Caco-2 (cell line): ENCODE measurements at regions of chr7 and their contacts with region 1.

Region 1: GRCh38 chr7:76047811-76048667 is at the starts of genes MDH2 and STYXL1:
- DNase-seq: peak; percentile 96 to 97
- H3K4me3 ChIP-seq: peak within 1 kb of the TSS; percentile 77
- H3K4me3 Mint-ChIP-seq: peak within 1 kb of the TSS; percentile 100
- H3K27ac Mint-ChIP-seq: peak within 1 kb of the TSS; percentile 99
- H3K4me1 ChIP-seq: peaks cover 13% of the 10 kb centered on the region
- H3K4me1 Mint-ChIP-seq: peaks cover 22% of the 10 kb centered on the region
- H3K27me3 ChIP-seq: no peaks in the 10 kb centered on the region
- H3K27me3 Mint-ChIP-seq: no peaks in the 10 kb centered on the region
- CTCF ChIP-seq: no peak
- total RNA-seq, gene MDH2: 302 and 313 TPM in 2 replicates
- total RNA-seq, gene STYXL1: 42.3 and 49.7 TPM in 2 replicates

Region 2: DNA sequence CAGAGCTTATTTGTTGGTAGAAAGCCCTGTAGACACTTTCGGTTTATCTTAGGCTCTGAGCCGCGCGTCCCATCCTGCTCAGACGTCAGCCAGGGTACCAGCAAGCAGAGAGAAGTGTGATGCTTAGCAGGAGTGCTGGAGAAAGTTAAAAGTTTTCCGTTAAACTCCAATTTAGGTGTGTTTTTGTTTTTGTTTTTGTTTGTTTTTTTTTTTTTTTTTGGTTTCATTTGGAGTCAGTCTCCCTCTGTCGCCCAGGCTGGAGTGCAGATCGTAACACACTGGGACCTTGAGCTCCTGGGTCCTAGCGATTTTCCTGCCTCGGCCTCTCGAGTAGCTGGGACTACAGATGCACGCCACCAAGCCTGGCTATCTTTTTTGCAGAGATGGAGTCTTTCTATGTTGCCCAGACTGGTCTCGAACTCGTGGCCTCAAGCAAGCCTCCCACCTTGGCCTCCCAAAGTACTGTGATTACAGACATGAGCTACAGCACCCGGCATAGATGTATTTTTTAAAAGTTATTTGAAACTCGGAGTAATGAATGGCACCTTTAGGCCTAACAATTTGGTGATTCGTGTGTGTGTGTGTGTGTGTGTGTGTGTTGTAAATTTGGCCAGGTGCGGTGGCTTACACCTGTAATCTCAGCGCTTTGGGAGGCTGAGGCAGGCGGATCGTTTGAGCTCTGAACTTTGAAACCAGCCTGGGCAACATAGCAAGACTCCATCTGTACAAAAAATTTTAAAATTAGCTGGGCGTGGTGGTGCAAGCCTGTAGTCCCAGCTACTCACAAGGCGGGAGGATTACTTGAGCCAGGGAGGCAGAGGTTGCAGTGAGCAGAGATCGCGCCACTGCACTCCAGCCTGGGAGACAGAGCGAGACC is 308.0 kb before region 1 on chr7:
- CTCF ChIA-PET with region 1: no interaction called
- POLR2A ChIA-PET with region 1: interaction called, 13 read pairs
- intact Hi-C with region 1: no loop called
- DNase-seq: peak in 1 of 2 experiments; percentile 44
- H3K4me3 ChIP-seq: peak overlapping the region; percentile 98
- H3K4me3 Mint-ChIP-seq: peak overlapping the region; percentile 82
- H3K27ac Mint-ChIP-seq: peak overlapping the region; percentile 46
- H3K4me1 ChIP-seq: no peaks in the 10 kb centered on the region
- H3K4me1 Mint-ChIP-seq: peaks cover 14% of the 10 kb centered on the region
- H3K27me3 ChIP-seq: no peaks in the 10 kb centered on the region
- H3K27me3 Mint-ChIP-seq: peaks cover 11% of the 10 kb centered on the region
- CTCF ChIP-seq: no peak

Region 3: DNA sequence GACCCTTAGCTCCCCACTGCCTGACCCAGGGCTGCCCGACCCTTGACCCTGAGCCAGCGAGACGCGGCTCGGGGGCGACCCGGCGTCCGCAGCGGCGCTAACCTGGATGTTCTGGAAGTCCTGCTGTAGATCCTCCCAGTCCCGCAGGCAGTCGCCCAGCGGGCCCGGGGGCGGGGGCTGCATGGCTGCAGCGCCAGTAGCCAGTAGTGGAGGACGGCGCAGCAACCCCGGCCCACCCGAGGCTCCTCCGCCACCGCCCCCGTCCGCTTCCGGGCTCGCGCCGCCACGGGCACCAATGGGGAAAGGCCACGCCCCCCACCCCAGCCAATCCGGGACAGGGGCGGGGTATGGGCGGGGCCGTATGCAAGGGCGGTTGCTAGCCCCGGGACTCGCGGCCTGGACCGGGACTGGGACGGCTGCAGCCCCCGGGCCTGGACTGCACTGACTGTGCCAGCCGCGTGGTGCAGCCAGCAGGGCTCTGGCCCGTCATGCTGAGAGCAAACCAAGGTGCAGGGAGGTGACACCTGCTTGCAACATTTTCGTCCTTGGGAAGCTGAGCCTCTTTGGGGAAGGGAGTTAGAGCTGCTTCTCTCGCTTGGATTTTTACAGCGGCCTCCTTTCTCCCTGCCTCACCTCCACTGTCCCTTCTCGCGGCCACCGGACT is 53.5 kb before region 1 on chr7 and contains the start of gene TMEM120A:
- CTCF ChIA-PET with region 1: interaction called, 3 read pairs
- POLR2A ChIA-PET with region 1: interaction called, 5 read pairs
- intact Hi-C with region 1: loop called (anchors 5 kb)
- DNase-seq: peak; percentile 96 to 98
- H3K4me3 ChIP-seq: peak within 1 kb of the TSS; percentile 89
- H3K4me3 Mint-ChIP-seq: peak within 1 kb of the TSS; percentile 80
- H3K27ac Mint-ChIP-seq: peak within 1 kb of the TSS; percentile 87
- H3K4me1 ChIP-seq: peaks cover 40% of the 10 kb centered on the region
- H3K4me1 Mint-ChIP-seq: peaks cover 30% of the 10 kb centered on the region
- H3K27me3 ChIP-seq: no peaks in the 10 kb centered on the region
- H3K27me3 Mint-ChIP-seq: no peaks in the 10 kb centered on the region
- CTCF ChIP-seq: no peak
- total RNA-seq, gene TMEM120A: 65.4 and 71.1 TPM in 2 replicates

Region 4: GRCh38 chr7:76037310-76037709 is 10.7 kb before region 1 on chr7:
- CTCF ChIA-PET with region 1: no interaction called
- POLR2A ChIA-PET with region 1: interaction called, 12 read pairs
- intact Hi-C with region 1: no loop called
- DNase-seq: no peak
- H3K4me3 ChIP-seq: no peak overlapping the region
- H3K4me3 Mint-ChIP-seq: no peak overlapping the region
- H3K27ac Mint-ChIP-seq: no peak overlapping the region
- H3K4me1 ChIP-seq: no peaks in the 10 kb centered on the region
- H3K4me1 Mint-ChIP-seq: no peaks in the 10 kb centered on the region
- H3K27me3 ChIP-seq: no peaks in the 10 kb centered on the region
- H3K27me3 Mint-ChIP-seq: no peaks in the 10 kb centered on the region
- CTCF ChIP-seq: no peak

Region 5: GRCh38 chr7:76133164-76133775 is 85.2 kb after region 1 on chr7:
- CTCF ChIA-PET with region 1: no interaction called
- POLR2A ChIA-PET with region 1: interaction called, 3 read pairs
- intact Hi-C with region 1: loop called (anchors 5 kb)
- DNase-seq: no peak
- H3K4me3 ChIP-seq: no peak overlapping the region
- H3K4me3 Mint-ChIP-seq: no peak overlapping the region
- H3K27ac Mint-ChIP-seq: no peak overlapping the region
- H3K4me1 ChIP-seq: no peaks in the 10 kb centered on the region
- H3K4me1 Mint-ChIP-seq: no peaks in the 10 kb centered on the region
- H3K27me3 ChIP-seq: no peaks in the 10 kb centered on the region
- H3K27me3 Mint-ChIP-seq: peaks cover 21% of the 10 kb centered on the region
- CTCF ChIP-seq: no peak

Region 6: DNA sequence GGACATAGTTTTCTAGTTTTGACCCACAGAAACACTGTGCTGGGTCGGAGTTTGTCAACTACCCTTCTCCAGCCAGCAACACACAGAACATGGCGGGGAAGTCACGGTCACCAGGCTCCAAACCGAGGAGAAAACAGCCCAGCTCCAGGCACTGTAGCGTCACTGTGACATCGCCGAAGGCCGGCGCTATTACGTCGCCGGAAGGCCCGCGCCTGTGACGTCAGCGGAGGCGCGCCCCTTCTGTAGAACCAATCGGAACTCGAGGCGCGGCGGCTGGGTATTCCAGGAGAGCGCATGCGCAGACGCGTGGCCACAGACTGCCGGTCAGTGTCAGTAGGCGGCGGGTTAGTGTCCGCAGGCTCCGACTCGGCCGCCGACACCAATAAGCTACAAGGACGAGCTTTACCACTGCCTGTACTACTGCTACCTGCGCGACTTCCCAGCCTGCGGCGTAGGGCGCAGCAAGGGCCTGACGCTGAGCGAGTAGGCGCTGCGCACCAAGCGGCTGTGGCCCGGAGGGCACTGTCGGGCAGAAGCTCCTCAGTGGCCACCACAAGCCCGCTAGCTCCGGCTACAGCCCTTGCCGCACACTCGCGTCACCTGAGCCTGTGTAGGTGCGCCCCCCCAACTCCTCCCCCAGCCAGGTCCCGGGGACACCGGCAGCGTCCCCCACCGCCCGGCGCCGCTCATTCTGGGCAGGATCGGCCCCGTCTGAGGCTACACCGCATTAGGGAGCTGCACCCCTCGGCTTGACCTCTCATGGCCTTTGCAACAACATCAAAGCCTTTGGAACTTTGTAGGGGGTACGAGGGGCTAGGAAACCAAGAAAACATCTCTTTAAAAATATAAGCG is 118.6 kb after region 1 on chr7:
- CTCF ChIA-PET with region 1: no interaction called
- POLR2A ChIA-PET with region 1: interaction called, 14 read pairs
- intact Hi-C with region 1: no loop called
- DNase-seq: peak; percentile 98 to 99
- H3K4me3 ChIP-seq: peak overlapping the region; percentile 64
- H3K4me3 Mint-ChIP-seq: peak overlapping the region; percentile 78
- H3K27ac Mint-ChIP-seq: peak overlapping the region; percentile 94
- H3K4me1 ChIP-seq: no peaks in the 10 kb centered on the region
- H3K4me1 Mint-ChIP-seq: no peaks in the 10 kb centered on the region
- H3K27me3 ChIP-seq: no peaks in the 10 kb centered on the region
- H3K27me3 Mint-ChIP-seq: no peaks in the 10 kb centered on the region
- CTCF ChIP-seq: peak in 1 of 2 experiments; percentile 14